ENCODE measurements at regions of chr14 and their contacts with region 1.

Region 1: GRCh38 chr14:93655078-93655750 is 133.1 kb downstream of the PRIMA1 start:
- DNase-seq: peak in 1 of 2 donors; percentile 53
- H3K4me3 ChIP-seq: no peak overlapping the region
- H3K27ac ChIP-seq: no peak overlapping the region
- H3K4me1 ChIP-seq: no peaks in the 10 kb centered on the region
- H3K27me3 ChIP-seq: no peaks in the 10 kb centered on the region
- CTCF ChIP-seq: peak; percentile 67 to 79 (median 73)
- POLR2A ChIP-seq: no peak

Region 2: GRCh38 chr14:93788543-93789227 is 133.5 kb after region 1 on chr14:
- intact Hi-C with region 1: loop called (anchors 10 kb)
- DNase-seq: peak; percentile 71 to 74
- H3K4me3 ChIP-seq: peak overlapping the region; percentile 57 to 61
- H3K27ac ChIP-seq: peak overlapping the region; percentile 87 to 97
- H3K4me1 ChIP-seq: peaks cover 14 to 15% of the 10 kb centered on the region in 2 donors
- H3K27me3 ChIP-seq: no peaks in the 10 kb centered on the region
- CTCF ChIP-seq: peak; percentile 40 to 83 (median 54)
- POLR2A ChIP-seq: peak; percentile 10 to 73

Region 3: DNA sequence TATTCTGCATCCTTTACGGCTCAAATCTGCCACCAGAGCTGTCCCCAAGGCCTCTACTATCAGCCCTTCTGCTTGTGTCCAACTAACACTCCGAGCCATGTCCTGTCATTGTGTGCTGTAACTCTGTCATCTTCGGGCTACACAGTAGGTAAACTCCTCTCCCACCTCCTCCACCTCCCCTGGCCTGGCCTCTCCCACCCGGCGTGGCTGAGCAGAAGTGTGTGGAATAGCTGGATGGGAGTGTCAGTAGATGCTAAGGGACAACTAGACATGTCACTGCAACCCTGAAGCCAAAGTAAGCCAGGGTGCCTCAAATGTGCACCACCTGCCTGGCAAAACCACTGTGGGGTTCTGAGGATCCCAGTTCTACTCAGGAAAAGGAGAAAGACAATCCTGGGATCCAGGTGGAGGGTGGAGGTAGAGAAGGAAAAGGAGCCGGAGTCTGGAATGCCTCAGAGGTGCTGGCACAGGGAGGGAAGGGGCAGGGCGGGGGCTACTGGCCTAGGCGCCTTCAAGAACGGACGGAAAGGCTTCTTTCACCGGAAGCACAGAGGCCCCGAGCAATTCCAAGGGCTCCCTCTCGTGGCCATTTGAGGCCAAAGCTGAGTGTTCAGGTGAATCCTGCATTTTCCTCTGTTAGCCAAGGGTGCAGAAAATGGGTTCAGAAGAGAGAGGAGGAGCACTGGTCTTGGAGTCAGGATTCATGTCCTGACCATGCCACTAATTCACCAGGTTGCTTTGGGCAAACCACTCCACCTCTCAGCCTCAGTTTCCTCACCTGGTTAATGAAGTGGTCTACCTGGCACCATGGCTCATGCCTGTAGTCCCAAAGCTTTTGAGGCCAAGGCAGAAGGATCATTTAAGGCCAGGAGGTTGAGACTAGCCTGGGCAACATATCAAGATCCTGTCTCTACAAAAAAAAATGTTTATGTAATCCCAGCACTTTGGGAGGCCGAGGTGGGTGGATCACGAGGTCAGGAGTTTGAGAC is 251.4 kb after region 1 on chr14:
- intact Hi-C with region 1: loop called (anchors 5 kb)
- DNase-seq: peak; percentile 45 to 54
- H3K4me3 ChIP-seq: no peak overlapping the region
- H3K27ac ChIP-seq: no peak overlapping the region
- H3K4me1 ChIP-seq: no peaks in the 10 kb centered on the region
- H3K27me3 ChIP-seq: no peaks in the 10 kb centered on the region
- CTCF ChIP-seq: peak; percentile 54 to 67 (median 54)
- POLR2A ChIP-seq: no peak

Measured in uterus (tissue), 4 donors.